GM13976 (cell line): ENCODE measurements at regions of chr7 and their contacts with region 1.

Region 1: DNA sequence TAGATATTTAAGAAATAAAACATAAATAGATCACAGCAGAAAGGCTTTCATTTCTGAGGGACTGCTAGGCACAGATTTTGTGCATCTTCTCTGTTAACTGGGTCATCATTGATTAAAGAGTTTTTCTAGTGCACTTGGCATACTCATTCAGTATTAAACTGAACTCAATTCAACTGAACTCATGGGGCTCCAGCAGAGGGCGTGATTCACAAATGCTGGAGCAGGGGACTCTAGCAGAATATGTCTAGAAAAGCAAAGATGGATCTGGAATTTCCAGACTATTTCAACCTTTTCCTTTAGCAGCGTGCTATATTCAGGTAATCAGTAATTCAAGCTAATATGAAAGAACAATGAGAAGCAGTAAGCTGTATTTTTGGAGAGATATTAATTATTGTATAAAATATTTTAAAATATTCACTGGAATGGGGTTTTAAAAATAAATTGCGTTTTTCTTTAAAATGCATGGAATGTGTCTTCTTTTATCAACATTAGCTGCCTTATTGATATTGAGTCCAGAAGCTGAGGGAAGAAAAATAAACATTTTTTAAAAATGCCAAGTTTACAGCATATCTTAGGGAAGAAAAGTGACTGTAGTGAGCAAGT is 296.8 kb upstream of the CACNA2D1 start:
- DNase-seq: no peak
- CTCF ChIP-seq: peak; percentile 32

Region 2: GRCh38 chr7:81499262-81500116 is 1240.9 kb before region 1 on chr7:
- in situ Hi-C with region 1: loop called (anchors 25 kb)
- DNase-seq: peak; percentile 24
- CTCF ChIP-seq: peak; percentile 22

Region 3: GRCh38 chr7:82044497-82045080 is 695.8 kb before region 1 on chr7:
- in situ Hi-C with region 1: loop called (anchors 25 kb)
- DNase-seq: peak; percentile 8
- CTCF ChIP-seq: peak; percentile 41

Region 4: DNA sequence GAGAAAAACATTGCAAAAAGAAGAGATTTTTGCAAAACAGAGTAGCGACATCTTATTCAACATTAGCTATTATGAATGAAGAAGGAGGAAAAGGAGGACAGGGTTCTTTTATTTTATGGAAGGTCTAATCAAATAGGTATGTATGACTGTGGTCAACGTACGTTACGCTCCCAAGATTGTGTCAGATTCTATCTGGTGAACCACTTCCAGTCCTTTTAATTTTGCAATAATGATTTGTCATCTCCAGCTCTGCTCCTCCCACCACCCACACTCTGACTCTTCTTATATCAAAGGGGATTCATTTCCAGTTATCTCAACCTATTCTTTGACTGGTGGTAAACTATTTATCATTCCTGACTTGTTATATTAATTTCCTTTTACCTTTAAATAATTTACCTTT is 556.7 kb before region 1 on chr7:
- in situ Hi-C with region 1: no loop called
- DNase-seq: no peak
- CTCF ChIP-seq: no peak

Region 5: GRCh38 chr7:83347945-83348444 is 607.6 kb after region 1 on chr7:
- in situ Hi-C with region 1: no loop called
- DNase-seq: no peak
- CTCF ChIP-seq: no peak